Mucosa of descending colon (tissue), 3 donors: ENCODE measurements at regions of chr2 and their contacts with region 1.

Region 1: DNA sequence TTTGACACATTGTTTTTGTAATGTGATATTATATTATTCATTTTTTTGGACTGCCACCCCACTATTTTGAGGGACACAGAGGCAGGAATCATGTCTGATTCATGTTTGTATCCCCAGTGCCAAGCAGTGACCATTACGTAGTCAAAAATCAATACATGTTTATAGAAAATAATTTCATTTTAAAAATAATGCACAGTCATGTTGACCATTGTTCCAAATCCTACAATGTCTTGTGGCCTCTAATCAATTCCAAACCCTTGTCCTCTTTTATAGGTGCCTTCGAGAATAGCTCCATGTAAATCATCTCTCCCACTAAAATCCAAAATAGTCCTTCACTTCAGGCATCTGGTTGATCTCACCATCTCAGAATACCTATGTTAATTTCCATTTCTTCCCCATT is 454.7 kb downstream of the LRP1B start:
- DNase-seq: no peak
- ATAC-seq: no peak
- H3K4me3 ChIP-seq: no peak overlapping the region
- H3K4me1 ChIP-seq: no peaks in the 10 kb centered on the region
- CTCF ChIP-seq: no peak

Region 2: GRCh38 chr2:141570474-141571131 is 105.5 kb before region 1 on chr2:
- intact Hi-C with region 1: loop called in 1 of 2 experiments (anchors 5 kb)
- DNase-seq: peak in 1 of 3 donors; percentile 26
- ATAC-seq: no peak
- H3K4me3 ChIP-seq: no peak overlapping the region
- H3K4me1 ChIP-seq: no peaks in the 10 kb centered on the region
- CTCF ChIP-seq: no peak